Right cardiac atrium (tissue), 5 donors: ENCODE measurements at regions of chr12 and their contacts with region 1.

Region 1: DNA sequence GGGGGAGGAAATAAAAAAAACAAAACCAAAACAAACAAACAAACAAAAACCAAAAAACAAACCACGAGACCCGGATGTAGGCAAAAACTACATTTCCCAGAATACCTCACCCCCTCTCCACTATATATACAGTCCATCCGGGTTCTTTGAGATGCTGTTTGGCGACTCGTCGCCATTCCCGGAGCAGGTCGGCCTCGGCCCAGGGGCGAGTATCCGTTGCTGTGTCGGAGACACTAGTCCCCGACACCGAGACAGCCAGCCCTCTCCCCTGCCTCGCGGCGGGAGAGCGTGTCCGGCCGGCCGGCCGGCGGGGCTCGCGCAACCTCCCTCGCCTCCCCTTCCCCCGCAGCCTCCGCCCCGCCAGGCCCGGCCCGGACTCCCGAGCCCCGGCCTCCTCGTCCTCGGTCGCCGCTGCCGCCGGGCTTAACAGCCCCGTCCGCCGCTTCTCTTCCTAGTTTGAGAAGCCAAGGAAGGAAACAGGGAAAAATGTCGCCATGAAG is at the start of gene RNF10:
- DNase-seq: peak; percentile 67 to 88 (median 88)
- ATAC-seq: peak; percentile 82 to 86
- H3K4me3 ChIP-seq: peak within 1 kb of the TSS; percentile 64
- H3K27ac ChIP-seq: peak within 1 kb of the TSS; percentile 80
- H3K4me1 ChIP-seq: peaks cover 5% of the 10 kb centered on the region
- H3K27me3 ChIP-seq: no peaks in the 10 kb centered on the region
- total RNA-seq, gene RNF10: 235 to 259 (median 237) TPM

Region 2: GRCh38 chr12:120041386-120042231 is 492.6 kb before region 1 on chr12:
- intact Hi-C with region 1: no loop called
- DNase-seq: no peak
- ATAC-seq: no peak
- H3K4me3 ChIP-seq: no peak overlapping the region
- H3K27ac ChIP-seq: no peak overlapping the region
- H3K4me1 ChIP-seq: no peaks in the 10 kb centered on the region
- H3K27me3 ChIP-seq: no peaks in the 10 kb centered on the region

Region 3: DNA sequence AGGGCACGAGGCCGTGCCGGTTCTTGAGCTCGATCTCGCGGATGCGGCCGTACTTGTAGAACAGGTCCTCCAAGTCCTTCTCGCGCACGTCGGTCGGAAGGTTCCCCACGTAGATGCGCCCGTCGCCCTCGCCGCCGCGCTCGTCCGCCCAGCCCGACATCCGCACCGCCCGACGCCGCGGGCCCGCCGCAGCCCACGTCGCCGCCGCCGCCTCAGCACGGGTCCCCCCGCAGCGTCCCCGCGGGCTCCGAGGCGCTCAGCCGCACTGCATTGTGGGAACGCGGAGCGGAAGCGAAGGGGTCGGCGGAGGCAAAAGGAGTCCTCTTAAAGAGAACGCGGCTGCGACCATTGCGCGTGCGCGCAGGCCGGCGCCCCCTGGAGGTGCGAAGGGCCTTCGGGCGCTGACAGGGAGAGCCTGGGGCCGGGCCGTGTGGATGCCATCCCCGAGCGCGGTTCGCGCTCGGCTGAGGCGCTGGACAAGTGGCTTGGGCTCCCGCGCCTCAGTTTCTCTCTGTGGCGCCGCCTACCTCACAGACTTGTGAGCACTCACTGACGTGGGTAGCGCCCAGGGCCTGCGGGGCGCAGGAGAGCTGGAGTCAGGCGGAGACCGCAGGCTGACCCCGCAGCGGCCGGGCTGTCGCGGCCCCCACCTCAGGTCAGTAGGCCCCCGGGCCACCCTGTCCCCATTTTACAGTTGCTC is 64.7 kb before region 1 on chr12 and contains the start of gene SRSF9:
- intact Hi-C with region 1: loop called in 1 of 4 experiments (anchors 10 kb)
- DNase-seq: peak; percentile 96 to 99 (median 98)
- ATAC-seq: peak; percentile 96 to 97
- H3K4me3 ChIP-seq: peak within 1 kb of the TSS; percentile 99
- H3K27ac ChIP-seq: peak within 1 kb of the TSS; percentile 94
- H3K4me1 ChIP-seq: peaks cover 2% of the 10 kb centered on the region
- H3K27me3 ChIP-seq: no peaks in the 10 kb centered on the region
- total RNA-seq, gene SRSF9: 43.5 to 59.5 (median 47.9) TPM